ENCODE measurements at regions of chr1 and their contacts with region 1.

Region 1: DNA sequence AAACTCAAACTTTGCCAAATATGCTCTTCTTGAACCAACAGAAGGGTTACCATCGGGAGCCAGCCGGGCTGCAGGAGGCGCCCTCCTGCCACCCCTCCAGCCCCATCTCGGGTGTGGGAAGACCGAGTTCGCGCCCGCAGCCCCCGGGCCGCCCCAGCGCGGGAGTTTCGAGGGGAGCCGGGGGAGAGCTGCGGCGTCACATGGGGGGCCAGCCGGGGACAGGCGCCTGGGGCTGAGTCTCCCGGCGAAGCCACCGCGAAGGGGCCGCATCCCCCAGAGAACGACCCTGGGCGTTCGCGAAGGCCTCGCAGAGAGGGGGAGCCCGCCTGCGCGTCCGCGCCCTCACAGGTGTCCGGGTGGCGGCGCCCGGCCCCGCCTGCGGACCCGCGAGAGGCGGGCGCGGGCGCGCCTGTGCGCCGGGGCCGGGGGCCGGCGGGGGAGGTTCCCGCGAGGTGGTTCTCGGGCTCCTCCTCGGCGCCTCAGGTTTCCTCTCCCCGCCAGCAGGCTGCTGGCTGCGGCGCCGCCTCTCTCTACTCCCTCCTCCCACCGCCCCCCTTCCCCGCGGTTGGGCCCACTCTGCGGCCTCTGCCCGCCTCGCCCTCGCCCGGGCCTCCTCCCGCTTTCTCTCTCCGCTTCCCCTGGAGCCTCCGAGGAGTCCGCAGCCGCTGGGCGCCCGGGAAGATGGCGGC is at the start of gene RAVER2:
- DNase-seq: peak; percentile 64 to 70 (median 68)
- ATAC-seq: peak; percentile 87
- H3K4me3 ChIP-seq: peak within 1 kb of the TSS; percentile 55
- H3K27ac ChIP-seq: 0 out of 3 replicates have a peak within 1 kb of the TSS, but pooled peaks have one; percentile 2
- H3K4me1 ChIP-seq: peaks cover 0 to 15% of the 10 kb centered on the region in 2 experiments; a peak in 2 of 5 replicates
- H3K27me3 ChIP-seq: peaks cover 5 to 7% of the 10 kb centered on the region in 2 experiments; a peak in 1 of 5 replicates
- CTCF ChIP-seq: peak; percentile 21 to 67 (median 64); a peak in 4 of 6 replicates
- EP300 ChIP-seq: 0 out of 2 replicates have a peak, but pooled peaks have one; percentile 2
- POLR2A ChIP-seq: no peak
- RAD21 ChIP-seq: peak; percentile 76 to 83
- polyA plus RNA-seq, gene RAVER2: 1.8 to 2.1 TPM

Region 2: DNA sequence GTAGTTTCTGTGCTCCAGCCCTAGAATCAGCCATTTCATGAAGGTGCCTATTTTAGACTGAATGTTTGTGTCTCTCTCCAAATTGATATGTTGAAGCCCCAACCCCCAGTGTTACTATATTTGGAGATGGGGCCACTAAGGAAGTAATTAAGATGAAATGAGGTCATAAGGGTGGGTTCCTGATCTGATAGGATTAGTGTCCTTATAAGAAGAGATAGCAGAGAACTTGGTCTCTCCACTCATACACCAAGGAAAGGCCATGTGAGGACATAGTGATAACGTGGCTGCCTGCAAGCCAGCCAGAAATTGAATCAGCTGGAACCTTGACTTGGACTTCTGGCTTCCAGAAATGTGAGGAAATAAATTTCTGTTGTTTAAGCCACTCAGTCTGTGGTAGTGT is 12.6 kb after region 1 on chr1:
- CTCF ChIA-PET with region 1: interaction called, 3 read pairs
- POLR2A ChIA-PET with region 1: interaction called, 12 read pairs
- in situ Hi-C with region 1: no loop called
- intact Hi-C with region 1: no loop called
- DNase-seq: peak in 2 of 4 experiments; percentile 13 to 58
- ATAC-seq: peak; percentile 86
- H3K4me3 ChIP-seq: no peak overlapping the region
- H3K27ac ChIP-seq: peak overlapping the region; percentile 60
- H3K4me1 ChIP-seq: peaks cover 0 to 14% of the 10 kb centered on the region in 2 experiments; a peak in 2 of 5 replicates
- H3K27me3 ChIP-seq: no peaks in the 10 kb centered on the region; a peak in 1 of 5 replicates
- CTCF ChIP-seq: no peak
- EP300 ChIP-seq: peak; percentile 74
- POLR2A ChIP-seq: no peak
- RAD21 ChIP-seq: 0 out of 4 replicates have a peak, but pooled peaks of 1 of the 2 experiments have one; percentile 8

Region 3: GRCh38 chr1:64801851-64802523 is 57.4 kb after region 1 on chr1:
- CTCF ChIA-PET with region 1: no interaction called
- POLR2A ChIA-PET with region 1: no interaction called
- in situ Hi-C with region 1: no loop called
- intact Hi-C with region 1: loop called (anchors 5 kb)
- DNase-seq: peak in 1 of 4 experiments; percentile 9
- ATAC-seq: no peak
- H3K4me3 ChIP-seq: no peak overlapping the region
- H3K27ac ChIP-seq: no peak overlapping the region
- H3K4me1 ChIP-seq: no peaks in the 10 kb centered on the region
- H3K27me3 ChIP-seq: no peaks in the 10 kb centered on the region
- CTCF ChIP-seq: no peak
- EP300 ChIP-seq: no peak
- POLR2A ChIP-seq: no peak
- RAD21 ChIP-seq: no peak

Region 4: DNA sequence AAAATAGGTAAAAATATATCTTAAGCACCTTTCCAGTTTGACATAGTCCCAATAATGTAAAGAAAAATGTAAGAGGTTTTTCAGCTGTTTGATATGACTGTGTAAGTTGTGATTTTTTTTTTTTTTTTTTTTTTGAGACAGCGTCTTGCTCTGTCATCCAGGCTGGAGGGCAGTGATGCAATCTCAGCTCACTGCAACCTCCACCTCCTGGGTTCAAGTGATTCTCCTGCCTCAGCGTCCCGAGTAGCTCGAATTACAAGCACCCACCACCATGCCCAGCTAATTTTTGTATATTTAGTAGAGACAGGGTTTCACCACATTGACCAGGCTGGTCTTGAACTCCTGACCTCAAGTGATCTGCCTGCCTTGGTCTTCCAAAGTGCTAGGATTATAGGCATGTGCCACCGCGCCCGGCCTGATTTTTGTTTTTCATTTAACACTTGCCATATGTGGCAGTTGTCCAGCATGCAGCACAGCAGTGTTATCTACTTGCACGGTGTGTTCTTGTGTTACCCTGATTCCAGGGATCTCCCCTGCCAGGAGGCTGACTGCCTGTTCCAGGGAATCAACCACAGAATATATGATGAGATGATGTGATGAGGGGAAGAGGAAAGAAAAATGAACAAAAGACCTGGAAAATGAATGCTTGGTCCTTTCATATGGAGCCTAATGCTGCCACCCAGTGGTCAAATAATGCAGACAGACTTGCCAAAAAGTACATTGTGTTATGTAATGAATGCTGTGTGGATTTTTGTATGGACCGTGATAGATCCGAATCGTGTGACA is 79.2 kb after region 1 on chr1:
- CTCF ChIA-PET with region 1: interaction called, 12 read pairs
- POLR2A ChIA-PET with region 1: no interaction called
- in situ Hi-C with region 1: loop called (anchors 10 kb)
- intact Hi-C with region 1: loop called (anchors 1 kb)
- DNase-seq: peak; percentile 47 to 83 (median 52)
- ATAC-seq: peak; percentile 91
- H3K4me3 ChIP-seq: no peak overlapping the region
- H3K27ac ChIP-seq: no peak overlapping the region
- H3K4me1 ChIP-seq: no peaks in the 10 kb centered on the region
- H3K27me3 ChIP-seq: no peaks in the 10 kb centered on the region
- CTCF ChIP-seq: peak; percentile 72 to 95 (median 82)
- EP300 ChIP-seq: no peak
- POLR2A ChIP-seq: no peak
- RAD21 ChIP-seq: peak; percentile 93 to 97

Region 5: DNA sequence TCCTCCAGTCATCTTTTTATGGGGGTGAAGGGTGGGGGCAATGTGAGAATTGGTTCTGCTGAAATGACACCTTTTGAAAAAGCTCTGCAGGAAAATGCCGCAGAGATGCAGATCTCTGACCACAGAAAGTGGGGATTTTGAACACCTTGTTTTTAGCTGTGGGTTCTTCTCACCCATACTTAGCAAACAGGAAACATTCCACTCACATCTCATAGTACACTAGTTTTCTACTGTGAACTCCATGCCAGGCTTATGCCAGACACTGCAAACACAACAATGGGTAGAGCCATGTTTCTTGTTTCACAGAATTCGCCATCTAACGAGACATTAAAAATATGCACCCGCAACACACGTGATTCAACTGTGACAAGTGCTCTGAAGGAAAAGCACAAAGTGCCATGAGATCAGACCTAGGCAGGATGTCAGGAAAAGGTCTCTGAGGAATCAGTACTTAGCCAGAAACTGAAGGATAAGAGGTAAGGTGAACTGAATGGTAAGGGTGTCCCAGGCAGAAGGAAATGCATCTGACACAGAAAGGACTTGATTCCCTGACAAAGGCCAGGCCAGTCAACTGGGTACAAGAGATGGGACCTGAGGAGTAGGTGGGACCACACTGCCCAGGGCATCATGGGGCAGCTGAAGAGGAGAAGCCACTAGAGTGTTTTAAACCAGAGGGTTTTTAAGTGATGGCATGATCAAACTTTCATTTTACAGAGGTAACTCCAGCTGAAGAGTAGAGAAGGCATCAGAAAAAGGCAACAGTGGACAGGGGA is 305.5 kb after region 1 on chr1:
- CTCF ChIA-PET with region 1: no interaction called
- POLR2A ChIA-PET with region 1: no interaction called
- in situ Hi-C with region 1: no loop called
- intact Hi-C with region 1: loop called (anchors 10 kb)
- DNase-seq: no peak
- ATAC-seq: no peak
- H3K4me3 ChIP-seq: no peak overlapping the region
- H3K27ac ChIP-seq: no peak overlapping the region
- H3K4me1 ChIP-seq: no peaks in the 10 kb centered on the region
- H3K27me3 ChIP-seq: no peaks in the 10 kb centered on the region
- CTCF ChIP-seq: no peak
- EP300 ChIP-seq: no peak
- POLR2A ChIP-seq: no peak
- RAD21 ChIP-seq: no peak